AG04449 (cell line): ENCODE measurements at regions of chr5 and their contacts with region 1.

Region 1: DNA sequence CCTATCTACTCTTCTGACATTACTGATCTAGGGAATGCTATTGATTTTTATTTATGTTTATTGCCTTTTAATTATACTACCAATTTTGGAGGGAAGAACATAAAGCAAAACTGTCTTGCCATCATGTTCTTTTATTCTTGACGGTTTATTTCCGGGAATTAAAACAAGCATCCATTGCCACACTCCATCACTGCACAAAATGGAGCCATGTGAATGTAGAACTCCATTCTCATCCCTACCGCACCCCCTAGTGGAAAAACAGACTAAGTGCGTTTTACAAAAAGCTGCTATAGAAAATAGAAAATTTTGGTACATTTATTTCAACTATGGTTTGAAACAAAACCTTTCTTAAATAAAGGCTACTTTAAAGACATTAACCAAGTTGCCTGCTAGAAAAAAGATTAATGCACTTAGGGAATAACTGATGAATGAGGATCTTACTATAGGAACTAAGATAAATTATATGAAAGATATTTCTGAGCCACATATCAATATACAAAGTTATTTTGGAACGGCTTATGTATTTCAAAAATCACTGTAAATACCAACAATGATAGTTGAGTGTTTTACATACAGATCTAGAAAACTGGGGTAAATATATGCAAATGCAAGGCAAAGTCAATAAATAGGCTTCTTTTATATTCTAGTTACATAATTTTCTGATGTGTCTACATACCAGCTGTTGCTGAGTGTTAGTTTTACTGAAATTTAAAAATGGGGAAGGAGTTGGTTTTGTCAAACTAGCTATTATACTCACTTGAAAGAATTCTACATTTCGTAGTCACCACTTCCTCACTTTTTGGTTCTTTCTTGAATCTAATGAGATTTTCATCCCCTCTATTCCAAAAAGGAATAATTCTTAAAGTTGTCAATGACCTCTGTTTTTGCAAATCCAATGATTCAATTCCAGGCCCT is 26.5 kb downstream of the OXCT1 start:
- DNase-seq: peak; percentile 10
- H3K4me3 ChIP-seq: no peak overlapping the region
- CTCF ChIP-seq: peak; percentile 43

Region 2: DNA sequence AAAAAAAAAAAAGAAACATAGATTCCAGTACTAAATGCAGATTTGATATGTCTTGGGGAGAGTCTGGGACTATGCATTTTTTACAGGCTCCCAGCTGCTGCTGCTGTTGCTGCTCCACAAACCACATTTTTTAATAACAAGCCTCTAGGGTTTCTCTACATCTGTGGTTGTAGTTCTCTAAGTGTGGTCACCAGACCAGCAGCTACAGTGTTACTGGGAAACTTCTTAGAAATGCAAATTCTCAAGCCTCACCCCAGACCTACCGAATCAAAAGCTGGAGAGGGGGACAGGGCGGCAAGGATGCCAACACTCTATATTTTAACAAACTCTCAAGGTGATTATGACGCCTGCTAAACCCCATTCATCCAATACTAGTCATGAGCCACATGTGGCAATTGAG is 1457.4 kb before region 1 on chr5:
- CTCF ChIA-PET with region 1: no interaction called
- POLR2A ChIA-PET with region 1: no interaction called
- DNase-seq: no peak
- H3K4me3 ChIP-seq: no peak overlapping the region
- CTCF ChIP-seq: no peak

Region 3: GRCh38 chr5:40904205-40904993 is 939.3 kb before region 1 on chr5:
- CTCF ChIA-PET with region 1: interaction called, 10 read pairs
- POLR2A ChIA-PET with region 1: no interaction called
- DNase-seq: peak; percentile 26
- H3K4me3 ChIP-seq: no peak overlapping the region
- CTCF ChIP-seq: peak; percentile 88

Region 4: GRCh38 chr5:41707853-41708603 is 135.7 kb before region 1 on chr5:
- CTCF ChIA-PET with region 1: interaction called, 171 read pairs
- POLR2A ChIA-PET with region 1: no interaction called
- DNase-seq: peak; percentile 9
- H3K4me3 ChIP-seq: no peak overlapping the region
- CTCF ChIP-seq: peak; percentile 43

Region 5: DNA sequence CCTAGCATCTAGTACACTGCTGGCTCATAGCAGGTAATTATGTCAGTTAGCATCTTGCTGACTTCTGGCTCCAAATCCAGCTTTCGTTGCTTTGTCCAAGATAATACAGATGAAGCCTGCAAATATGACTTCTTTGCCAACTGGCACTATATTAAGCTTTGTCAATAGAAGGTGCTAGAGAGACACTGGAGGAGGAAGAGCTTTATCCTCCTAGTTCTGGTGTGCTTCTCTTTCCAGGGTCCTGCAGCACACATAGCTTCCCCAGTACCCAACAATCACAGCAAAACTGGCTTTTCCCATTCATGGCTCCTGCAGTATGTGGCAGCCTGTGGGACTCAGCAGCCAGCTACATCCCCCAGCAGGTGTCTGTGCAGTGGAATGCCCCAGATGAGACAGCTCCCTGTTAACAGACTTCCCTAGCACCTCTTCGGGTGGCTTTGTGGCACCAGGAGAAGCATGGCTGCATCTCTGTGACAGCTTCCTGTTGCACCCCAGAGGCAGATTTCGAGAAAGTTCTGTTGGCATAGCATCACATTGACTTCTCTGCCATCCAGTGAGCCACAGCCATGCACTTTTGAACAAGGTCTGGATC is 121.3 kb before region 1 on chr5:
- CTCF ChIA-PET with region 1: interaction called, 23 read pairs
- POLR2A ChIA-PET with region 1: no interaction called
- DNase-seq: no peak
- H3K4me3 ChIP-seq: no peak overlapping the region
- CTCF ChIP-seq: no peak

Region 6: GRCh38 chr5:41787265-41787664 is 56.4 kb before region 1 on chr5:
- CTCF ChIA-PET with region 1: no interaction called
- POLR2A ChIA-PET with region 1: no interaction called
- DNase-seq: no peak
- H3K4me3 ChIP-seq: no peak overlapping the region
- CTCF ChIP-seq: no peak

Region 7: GRCh38 chr5:41827792-41828191 is 15.9 kb before region 1 on chr5:
- CTCF ChIA-PET with region 1: interaction called, 23 read pairs
- POLR2A ChIA-PET with region 1: no interaction called
- DNase-seq: no peak
- H3K4me3 ChIP-seq: no peak overlapping the region
- CTCF ChIP-seq: no peak